ENCODE measurements at regions of chr10 and their contacts with region 1.

Region 1: DNA sequence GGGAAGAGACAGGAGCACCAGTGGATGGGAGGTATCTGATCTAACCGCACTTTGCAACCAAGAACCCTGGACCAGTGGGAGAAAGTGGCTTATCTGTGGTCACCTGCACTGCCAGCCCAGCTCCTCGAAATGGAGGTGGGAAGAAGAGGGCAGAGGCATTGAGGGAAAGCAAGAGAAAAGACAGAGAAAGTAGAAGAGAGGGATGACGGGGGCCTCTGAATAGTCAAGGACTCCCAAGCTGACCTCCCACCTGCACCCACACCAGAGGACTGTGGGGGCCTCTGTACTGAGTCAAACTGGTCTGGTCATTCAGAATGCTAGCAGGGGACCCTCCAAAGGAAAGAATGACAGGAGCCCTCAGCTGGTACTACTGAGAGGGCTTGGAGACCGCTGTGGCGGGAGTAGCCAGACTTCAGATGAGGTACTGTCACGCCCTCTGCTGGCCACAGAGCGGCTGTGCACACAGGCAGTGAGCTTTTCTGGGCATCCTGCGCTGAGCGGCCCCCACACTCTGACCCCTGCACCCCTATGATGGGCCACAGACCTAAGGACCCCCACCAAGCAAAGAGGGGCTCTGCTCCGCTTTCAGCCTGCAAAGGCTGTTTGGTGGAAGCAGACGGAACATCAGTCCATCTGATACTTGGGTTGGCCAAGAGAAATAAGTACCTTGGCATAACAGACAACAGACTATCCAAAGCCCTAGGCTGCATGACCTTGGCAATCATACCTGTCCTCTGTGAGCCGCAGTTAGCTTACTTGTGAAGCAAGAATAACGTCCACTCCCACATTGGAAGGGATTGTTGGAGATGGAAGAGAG is 112.9 kb downstream of the COL13A1 start:
- DNase-seq: peak; percentile 65 to 74
- ATAC-seq: peak; percentile 87 to 97
- H3K4me3 ChIP-seq: no peak overlapping the region
- H3K27ac ChIP-seq: no peak overlapping the region
- H3K4me1 ChIP-seq: no peaks in the 10 kb centered on the region
- CTCF ChIP-seq: peak; percentile 92
- EP300 ChIP-seq: no peak
- POLR2A ChIP-seq: no peak
- RAD21 ChIP-seq: peak; percentile 91 to 92

Region 2: DNA sequence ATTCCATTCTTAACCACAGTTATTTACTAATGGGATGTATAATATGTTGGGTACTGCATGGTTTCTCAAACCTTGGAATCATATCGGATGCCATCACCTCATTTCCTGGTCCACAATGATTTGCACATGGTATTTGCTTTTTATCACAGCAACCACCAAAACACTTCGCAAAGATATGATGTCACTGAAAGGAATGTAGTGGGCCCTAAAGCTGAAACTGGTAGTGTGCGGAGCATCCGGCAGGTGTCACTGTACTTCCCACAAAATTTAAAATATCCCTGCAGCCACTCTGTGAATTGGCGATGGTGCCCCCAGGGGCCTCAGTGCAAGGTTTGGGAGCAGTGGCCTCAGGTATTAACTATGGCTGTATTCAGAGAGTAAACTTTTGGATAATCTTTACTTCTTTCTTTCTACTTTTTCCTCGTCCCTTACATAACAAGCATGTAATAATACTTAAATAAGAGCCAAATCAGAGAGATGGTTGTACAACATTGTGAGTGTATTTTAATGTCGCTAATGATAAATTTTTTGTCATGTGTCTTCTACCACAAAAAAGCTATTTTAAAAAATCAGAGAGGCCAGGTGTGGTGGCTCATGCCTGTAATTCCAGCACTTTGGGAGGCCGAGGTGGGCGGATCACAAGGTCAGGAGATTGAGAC is 218.4 kb before region 1 on chr10:
- CTCF ChIA-PET with region 1: interaction called, 37 read pairs
- POLR2A ChIA-PET with region 1: no interaction called
- DNase-seq: peak; percentile 84 to 90
- ATAC-seq: peak; percentile 94
- H3K4me3 ChIP-seq: no peak overlapping the region
- H3K27ac ChIP-seq: no peak overlapping the region
- H3K4me1 ChIP-seq: 0 out of 3 replicates have a peak, but pooled peaks cover 3% of the 10 kb centered on the region
- CTCF ChIP-seq: peak; percentile 83
- EP300 ChIP-seq: no peak
- POLR2A ChIP-seq: no peak
- RAD21 ChIP-seq: peak; percentile 62 to 67

Region 3: GRCh38 chr10:69786791-69787190 is 127.8 kb before region 1 on chr10:
- CTCF ChIA-PET with region 1: interaction called, 198 read pairs
- POLR2A ChIA-PET with region 1: interaction called, 6 read pairs
- DNase-seq: peak in 1 of 2 experiments; percentile 31
- ATAC-seq: peak; percentile 76 to 87; a peak in 4 of 6 replicates
- H3K4me3 ChIP-seq: no peak overlapping the region
- H3K27ac ChIP-seq: no peak overlapping the region
- H3K4me1 ChIP-seq: no peaks in the 10 kb centered on the region
- CTCF ChIP-seq: peak; percentile 33; the same call in 2 of the 3 replicates
- EP300 ChIP-seq: no peak
- POLR2A ChIP-seq: no peak
- RAD21 ChIP-seq: peak; percentile 63 to 71

Region 4: GRCh38 chr10:69835875-69836730 is 78.5 kb before region 1 on chr10:
- CTCF ChIA-PET with region 1: interaction called, 18 read pairs
- POLR2A ChIA-PET with region 1: no interaction called
- DNase-seq: no peak
- ATAC-seq: no peak
- H3K4me3 ChIP-seq: no peak overlapping the region
- H3K27ac ChIP-seq: no peak overlapping the region
- H3K4me1 ChIP-seq: no peaks in the 10 kb centered on the region; the same call in 2 of the 3 replicates
- CTCF ChIP-seq: no peak
- EP300 ChIP-seq: no peak
- POLR2A ChIP-seq: no peak
- RAD21 ChIP-seq: no peak

Region 5: GRCh38 chr10:69885379-69886013 is 29.1 kb before region 1 on chr10:
- CTCF ChIA-PET with region 1: interaction called, 182 read pairs
- POLR2A ChIA-PET with region 1: no interaction called
- DNase-seq: peak in 1 of 2 experiments; percentile 68
- ATAC-seq: peak in 1 of 2 experiments; percentile 76; a peak in 3 of 6 replicates
- H3K4me3 ChIP-seq: no peak overlapping the region
- H3K27ac ChIP-seq: no peak overlapping the region
- H3K4me1 ChIP-seq: no peaks in the 10 kb centered on the region
- CTCF ChIP-seq: 0 out of 3 replicates have a peak, but pooled peaks have one; percentile 4
- EP300 ChIP-seq: no peak
- POLR2A ChIP-seq: no peak
- RAD21 ChIP-seq: no peak

Region 6: DNA sequence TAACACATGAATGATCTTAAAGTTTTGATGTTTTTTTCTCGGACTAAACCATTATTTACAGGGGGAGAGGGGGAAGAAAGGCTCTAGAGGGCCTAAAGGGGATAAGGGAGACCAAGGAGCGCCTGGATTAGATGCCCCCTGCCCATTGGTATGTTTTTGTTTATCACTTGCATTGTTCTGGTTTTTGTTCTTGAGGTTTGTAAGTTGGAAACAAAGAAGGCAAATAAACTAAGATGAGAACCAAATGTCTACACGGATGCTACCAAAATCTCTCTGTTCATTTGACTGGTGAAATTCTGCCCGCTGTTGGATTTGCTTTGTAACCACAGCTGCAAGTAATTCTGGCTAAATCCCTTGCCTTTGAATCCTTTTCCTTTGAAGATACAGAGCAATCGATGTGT is 38.2 kb after region 1 on chr10:
- CTCF ChIA-PET with region 1: interaction called, 21 read pairs
- POLR2A ChIA-PET with region 1: no interaction called
- DNase-seq: no peak
- ATAC-seq: no peak
- H3K4me3 ChIP-seq: no peak overlapping the region
- H3K27ac ChIP-seq: no peak overlapping the region
- H3K4me1 ChIP-seq: no peaks in the 10 kb centered on the region
- CTCF ChIP-seq: no peak
- EP300 ChIP-seq: no peak
- POLR2A ChIP-seq: no peak
- RAD21 ChIP-seq: no peak

Region 7: GRCh38 chr10:70132098-70133029 is 217.8 kb after region 1 on chr10 and contains the start of gene AIFM2:
- CTCF ChIA-PET with region 1: no interaction called
- POLR2A ChIA-PET with region 1: no interaction called
- DNase-seq: peak; percentile 83 to 92
- ATAC-seq: peak; percentile 74 to 86
- H3K4me3 ChIP-seq: peak within 1 kb of the TSS; percentile 83
- H3K27ac ChIP-seq: peak within 1 kb of the TSS; percentile 92 to 94
- H3K4me1 ChIP-seq: peaks cover 28% of the 10 kb centered on the region
- CTCF ChIP-seq: no peak
- EP300 ChIP-seq: no peak
- POLR2A ChIP-seq: peak; percentile 29
- RAD21 ChIP-seq: no peak
- polyA plus RNA-seq, gene AIFM2: 27.6 and 30.0 TPM in 2 replicates